Activated B cell treated with CpG ODN at 0.5 μM for 24 hours (primary cell): ENCODE measurements at regions of chr9 and their contacts with region 1.

Region 1: GRCh38 chr9:71911253-71912074 is at the start of gene C9orf85:
- DNase-seq: peak; percentile 89
- ATAC-seq: peak; percentile 91
- H3K4me3 Mint-ChIP-seq: peak within 1 kb of the TSS; percentile 100
- H3K27ac Mint-ChIP-seq: peak within 1 kb of the TSS; percentile 98
- H3K4me1 Mint-ChIP-seq: peaks cover 67% of the 10 kb centered on the region
- H3K27me3 Mint-ChIP-seq: no peaks in the 10 kb centered on the region
- CTCF ChIP-seq: no peak
- total RNA-seq, gene C9orf85: 9.5 and 9.8 TPM in 2 replicates

Region 2: GRCh38 chr9:70413798-70414775 is 1497.4 kb before region 1 on chr9 and contains the start of gene KLF9:
- CTCF ChIA-PET with region 1: no interaction called
- POLR2A ChIA-PET with region 1: interaction called, 7 read pairs
- intact Hi-C with region 1: loop called (anchors 1 kb)
- DNase-seq: peak; percentile 78
- ATAC-seq: peak; percentile 72
- H3K4me3 Mint-ChIP-seq: peak within 1 kb of the TSS; percentile 97
- H3K27ac Mint-ChIP-seq: peak within 1 kb of the TSS; percentile 100
- H3K4me1 Mint-ChIP-seq: peaks cover 52% of the 10 kb centered on the region
- H3K27me3 Mint-ChIP-seq: no peaks in the 10 kb centered on the region
- CTCF ChIP-seq: no peak
- total RNA-seq, gene KLF9: 5.2 and 6.3 TPM in 2 replicates

Region 3: DNA sequence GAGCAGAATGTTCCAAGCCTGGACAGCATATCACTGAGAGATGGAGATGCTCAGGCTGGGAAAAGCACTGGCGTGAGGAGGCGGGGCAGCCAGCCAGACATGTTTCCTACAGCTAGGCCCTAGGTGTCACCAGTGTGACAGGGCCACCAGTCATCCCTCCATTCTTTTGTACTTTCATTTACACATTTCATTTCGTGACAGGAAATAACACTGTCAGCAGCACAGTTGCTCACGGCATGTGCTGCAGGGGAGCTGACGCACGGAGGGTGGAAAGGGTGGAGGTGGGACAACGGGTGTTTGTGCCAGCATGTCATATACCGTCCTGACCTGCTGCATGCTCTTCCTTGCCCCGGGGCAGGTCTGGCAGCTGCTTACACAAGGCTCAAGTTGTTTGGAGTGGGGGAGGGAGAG is 128.3 kb before region 1 on chr9:
- CTCF ChIA-PET with region 1: no interaction called
- POLR2A ChIA-PET with region 1: interaction called, 13 read pairs
- intact Hi-C with region 1: loop called (anchors 1 kb)
- DNase-seq: peak; percentile 37
- ATAC-seq: peak; percentile 83
- H3K4me3 Mint-ChIP-seq: peak overlapping the region; percentile 68
- H3K27ac Mint-ChIP-seq: peak overlapping the region; percentile 92
- H3K4me1 Mint-ChIP-seq: peaks cover 41% of the 10 kb centered on the region
- H3K27me3 Mint-ChIP-seq: no peaks in the 10 kb centered on the region
- CTCF ChIP-seq: no peak

Region 4: DNA sequence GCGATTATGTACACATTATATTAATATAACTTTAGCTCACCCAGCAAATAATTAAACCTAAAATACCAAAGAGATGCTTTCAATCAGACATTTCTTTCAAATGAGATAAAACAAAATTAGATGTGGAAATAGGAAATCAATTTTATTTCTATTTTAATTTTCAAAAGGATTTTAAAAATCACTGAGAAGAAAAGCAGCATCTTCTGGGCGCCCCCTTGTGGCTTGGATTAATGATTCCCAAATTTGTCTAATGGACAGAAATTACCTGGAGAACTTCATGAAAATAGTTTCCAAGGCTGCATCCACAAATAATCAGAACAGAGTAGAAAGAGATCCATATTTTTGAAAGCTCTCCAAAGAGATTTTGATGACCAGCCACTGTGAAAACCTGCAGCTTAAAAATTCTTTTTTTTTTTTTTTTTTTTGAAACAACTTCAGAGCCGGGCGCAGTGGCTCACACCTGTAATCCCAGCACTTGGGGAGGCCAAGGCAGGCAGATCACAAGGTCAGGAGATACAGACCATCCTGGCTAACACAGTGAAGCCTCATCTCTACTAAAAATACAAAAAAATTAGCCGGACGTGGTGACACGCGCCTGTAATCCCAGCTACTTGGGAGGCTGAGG is 92.2 kb before region 1 on chr9:
- CTCF ChIA-PET with region 1: interaction called, 4 read pairs
- POLR2A ChIA-PET with region 1: interaction called, 3 read pairs
- intact Hi-C with region 1: loop called (anchors 1 kb)
- DNase-seq: no peak
- ATAC-seq: no peak
- H3K4me3 Mint-ChIP-seq: no peak overlapping the region
- H3K27ac Mint-ChIP-seq: no peak overlapping the region
- H3K4me1 Mint-ChIP-seq: peaks cover 31% of the 10 kb centered on the region
- H3K27me3 Mint-ChIP-seq: no peaks in the 10 kb centered on the region
- CTCF ChIP-seq: peak; percentile 59

Region 5: DNA sequence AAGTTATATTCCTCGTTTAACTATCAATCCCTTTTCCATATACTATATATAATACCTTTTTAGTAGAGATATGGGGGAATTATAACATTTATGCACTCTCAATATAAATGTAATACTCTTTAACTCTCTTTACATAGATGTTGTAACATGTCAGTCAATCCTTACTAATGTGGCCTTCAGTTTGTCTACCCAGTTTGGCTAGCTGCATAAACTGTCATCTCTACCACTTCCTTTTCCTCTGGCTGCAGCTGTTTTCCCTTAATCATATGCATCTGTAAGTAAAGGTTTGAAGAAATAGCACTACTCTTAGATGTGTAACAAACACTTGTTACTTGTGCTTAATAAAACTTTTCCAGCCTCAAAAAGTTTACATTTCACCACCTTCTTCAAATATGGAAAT is 13.9 kb before region 1 on chr9:
- CTCF ChIA-PET with region 1: interaction called, 4 read pairs
- POLR2A ChIA-PET with region 1: interaction called, 18 read pairs
- intact Hi-C with region 1: loop called (anchors 1 kb)
- DNase-seq: no peak
- ATAC-seq: peak; percentile 66
- H3K4me3 Mint-ChIP-seq: no peak overlapping the region
- H3K27ac Mint-ChIP-seq: peak overlapping the region; percentile 80
- H3K4me1 Mint-ChIP-seq: peaks cover 89% of the 10 kb centered on the region
- H3K27me3 Mint-ChIP-seq: no peaks in the 10 kb centered on the region
- CTCF ChIP-seq: no peak